ENCODE measurements at regions of chr11 and their contacts with region 1.

Region 1: DNA sequence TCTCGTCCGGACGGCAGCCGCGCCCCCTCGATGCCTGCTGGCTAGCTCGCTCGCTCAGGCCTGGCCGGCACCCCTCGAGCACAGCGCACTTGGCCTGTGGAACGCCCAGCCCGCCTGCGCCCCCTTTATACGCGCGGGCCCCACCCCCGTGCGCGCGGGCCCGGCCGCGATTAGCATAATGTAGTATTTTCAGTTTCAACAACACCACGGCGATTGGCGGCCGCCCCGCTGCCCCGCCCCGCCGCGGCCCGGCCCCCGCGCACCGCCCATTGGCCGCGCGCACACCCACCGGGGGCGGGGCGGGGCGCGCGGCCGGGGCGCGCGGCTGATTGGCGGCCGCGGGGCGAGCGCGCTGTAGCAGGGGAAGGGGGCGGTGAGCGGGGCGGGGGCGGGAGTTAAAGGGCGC is at the start of gene CDKN1C:
- DNase-seq: peak; percentile 53 to 87
- H3K4me3 ChIP-seq: peak within 1 kb of the TSS; percentile 52 to 75 (median 56)
- H3K27ac ChIP-seq: no peak within 1 kb of the TSS
- H3K4me1 ChIP-seq: peaks cover 0 to 29% (median 23%) of the 10 kb centered on the region in 4 experiments; a peak in 6 of 7 replicates
- H3K27me3 ChIP-seq: peaks cover 2 to 79% (median 52%) of the 10 kb centered on the region in 4 experiments
- CTCF ChIP-seq: no peak
- EP300 ChIP-seq: no peak
- POLR2A ChIP-seq: peak in 1 of 2 experiments; percentile 90; a peak in 2 of 3 replicates
- RAD21 ChIP-seq: peak in 1 of 2 experiments; percentile 5; a peak in 1 of 4 replicates
- total RNA-seq, gene CDKN1C: 12.8 and 16.2 TPM in 2 replicates

Region 2: GRCh38 chr11:2555336-2556290 is 330.1 kb before region 1 on chr11:
- CTCF ChIA-PET with region 1: interaction called, 11 read pairs
- POLR2A ChIA-PET with region 1: no interaction called
- DNase-seq: no peak
- H3K4me3 ChIP-seq: no peak overlapping the region
- H3K27ac ChIP-seq: no peak overlapping the region
- H3K4me1 ChIP-seq: no peaks in the 10 kb centered on the region
- H3K27me3 ChIP-seq: peaks cover 13 to 76% (median 44%) of the 10 kb centered on the region in 4 experiments
- CTCF ChIP-seq: no peak
- EP300 ChIP-seq: no peak
- POLR2A ChIP-seq: no peak
- RAD21 ChIP-seq: no peak

Region 3: DNA sequence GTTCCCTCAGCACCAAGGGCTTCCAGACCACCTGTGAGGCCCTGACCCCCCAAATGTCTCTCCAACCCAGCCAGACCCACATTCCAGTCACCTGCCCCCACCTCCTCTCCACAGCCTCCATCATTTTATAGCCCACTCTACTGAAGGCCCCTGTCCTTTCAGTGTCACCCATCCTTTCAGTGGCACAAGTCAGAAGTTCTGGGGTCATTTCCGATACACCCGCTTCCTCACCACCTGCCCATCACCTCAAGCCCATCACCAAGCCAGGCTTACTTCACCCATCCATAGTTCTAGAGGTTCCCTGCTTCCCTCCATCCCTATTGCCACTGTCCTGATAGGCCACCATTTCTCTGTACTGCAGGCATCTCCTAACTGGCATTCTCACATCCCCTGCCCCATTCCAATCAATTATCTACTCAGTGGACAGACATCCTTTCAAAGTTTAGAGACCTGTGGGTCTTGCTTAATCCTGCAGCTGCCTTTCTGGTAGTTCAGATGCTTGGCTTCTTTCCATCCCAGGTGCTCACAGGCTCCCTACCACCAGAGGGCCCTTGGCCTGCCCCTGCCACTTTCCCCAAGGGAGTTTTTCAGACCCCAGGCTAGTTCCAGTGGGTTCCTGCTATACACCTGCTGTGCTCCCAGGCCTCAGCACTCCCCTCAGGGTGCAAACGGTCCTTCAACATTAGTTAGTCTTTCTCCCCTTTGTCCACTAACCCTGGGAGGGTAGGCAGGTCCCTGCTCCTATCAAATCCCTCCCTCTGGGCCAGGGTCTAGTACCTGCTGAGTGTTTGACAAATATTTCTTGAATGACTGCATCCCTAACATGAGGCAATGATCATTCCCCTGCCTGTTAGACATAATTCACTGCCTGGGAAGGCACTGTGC is 193.4 kb before region 1 on chr11:
- CTCF ChIA-PET with region 1: interaction called, 19 read pairs
- POLR2A ChIA-PET with region 1: interaction called, 5 read pairs
- DNase-seq: no peak
- H3K4me3 ChIP-seq: peak overlapping the region in 2 of 4 experiments; percentile 12 to 26; a peak in 1 of 8 replicates
- H3K27ac ChIP-seq: peak overlapping the region; percentile 51; the same call in 1 of the 2 replicates
- H3K4me1 ChIP-seq: peaks cover 47 to 74% (median 68%) of the 10 kb centered on the region in 4 experiments
- H3K27me3 ChIP-seq: no peaks in the 10 kb centered on the region; a peak in 1 of 7 replicates
- CTCF ChIP-seq: peak; percentile 51 to 71 (median 67)
- EP300 ChIP-seq: no peak
- POLR2A ChIP-seq: no peak
- RAD21 ChIP-seq: peak; percentile 45 to 65

Region 4: DNA sequence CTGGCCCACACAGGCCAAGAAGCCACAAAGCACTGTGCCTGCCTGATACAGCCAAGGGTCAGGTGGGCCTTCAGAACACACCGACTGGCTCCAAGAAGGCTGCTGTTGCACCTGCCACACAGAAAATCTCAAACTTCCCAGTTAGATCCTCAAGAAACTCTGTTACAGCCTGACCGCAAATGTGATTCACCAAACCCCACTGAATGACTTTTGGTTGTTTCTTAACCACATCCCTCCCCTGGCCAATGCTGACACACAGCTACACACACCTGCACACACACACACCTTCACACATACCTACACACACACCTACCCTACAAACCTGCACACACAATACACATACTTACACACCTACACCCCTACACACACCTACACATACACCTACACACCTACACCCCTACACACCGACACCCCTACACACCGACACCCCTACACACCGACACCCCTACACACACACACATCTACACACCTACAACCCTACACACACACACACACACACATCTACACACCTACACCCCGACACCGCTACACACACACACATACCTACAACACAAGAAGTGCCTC is 31.6 kb before region 1 on chr11:
- CTCF ChIA-PET with region 1: interaction called, 22 read pairs
- POLR2A ChIA-PET with region 1: no interaction called
- DNase-seq: no peak
- H3K4me3 ChIP-seq: no peak overlapping the region
- H3K27ac ChIP-seq: no peak overlapping the region
- H3K4me1 ChIP-seq: peaks cover 0 to 7% (median 3%) of the 10 kb centered on the region in 4 experiments; a peak in 5 of 7 replicates
- H3K27me3 ChIP-seq: peaks cover 0 to 23% (median 11%) of the 10 kb centered on the region in 4 experiments; a peak in 4 of 7 replicates
- CTCF ChIP-seq: no peak
- EP300 ChIP-seq: no peak
- POLR2A ChIP-seq: no peak
- RAD21 ChIP-seq: no peak

Region 5: DNA sequence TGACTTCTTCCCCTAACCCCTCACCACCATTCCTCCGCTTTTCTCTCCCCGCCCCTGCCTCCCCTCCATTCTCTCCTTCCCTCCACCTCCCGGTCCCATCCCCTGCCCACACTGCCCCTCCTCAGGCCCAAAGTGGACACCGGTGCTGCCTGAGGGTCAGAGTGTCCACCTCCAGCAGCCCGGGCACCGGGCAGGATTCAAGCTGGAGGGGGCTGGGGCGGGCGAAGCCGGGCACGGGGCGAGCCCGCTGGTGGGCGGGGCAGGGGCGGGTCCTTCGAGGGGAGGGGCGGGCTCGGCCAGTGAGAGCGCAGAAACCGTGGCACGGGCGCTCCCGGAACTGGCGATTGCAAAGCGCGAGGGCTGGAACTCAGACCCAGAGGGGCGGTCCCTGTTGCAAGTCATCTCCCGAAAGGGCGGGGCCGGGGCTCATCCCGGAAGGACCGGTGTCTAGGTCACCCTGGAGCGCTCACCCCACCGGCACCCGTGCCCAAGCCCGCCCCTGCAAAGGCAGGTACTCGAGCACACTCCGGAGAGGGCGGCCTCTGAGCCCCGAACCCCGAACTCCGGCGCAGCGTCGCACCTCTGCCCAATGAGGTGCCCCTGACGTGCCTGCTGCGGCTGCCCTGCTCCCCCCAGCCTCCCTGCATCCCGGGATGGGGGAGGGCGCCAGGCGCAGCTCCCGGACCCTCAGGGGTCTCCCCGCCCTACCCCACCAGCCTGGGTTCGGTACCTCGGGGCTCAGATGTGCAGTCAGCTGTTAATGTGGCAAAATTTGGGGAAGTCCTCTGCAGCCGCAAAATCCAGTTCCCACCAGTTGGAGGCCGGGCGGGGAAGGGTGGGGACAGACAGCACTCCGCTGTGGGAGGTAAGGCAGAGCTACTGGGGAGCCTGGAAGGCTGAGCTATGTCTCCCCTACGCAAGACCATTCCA is 16.4 kb after region 1 on chr11:
- CTCF ChIA-PET with region 1: interaction called, 68 read pairs
- POLR2A ChIA-PET with region 1: no interaction called
- DNase-seq: peak; percentile 73 to 92
- H3K4me3 ChIP-seq: peak overlapping the region; percentile 72 to 94 (median 76)
- H3K27ac ChIP-seq: peak overlapping the region; percentile 34; the same call in 1 of the 2 replicates
- H3K4me1 ChIP-seq: peaks cover 0 to 19% (median 14%) of the 10 kb centered on the region in 4 experiments; a peak in 5 of 7 replicates
- H3K27me3 ChIP-seq: peaks cover 0 to 25% (median 5%) of the 10 kb centered on the region in 4 experiments; a peak in 4 of 7 replicates
- CTCF ChIP-seq: no peak
- EP300 ChIP-seq: no peak
- POLR2A ChIP-seq: peak in 1 of 2 experiments; percentile 18; a peak in 1 of 3 replicates
- RAD21 ChIP-seq: no peak

Region 6: DNA sequence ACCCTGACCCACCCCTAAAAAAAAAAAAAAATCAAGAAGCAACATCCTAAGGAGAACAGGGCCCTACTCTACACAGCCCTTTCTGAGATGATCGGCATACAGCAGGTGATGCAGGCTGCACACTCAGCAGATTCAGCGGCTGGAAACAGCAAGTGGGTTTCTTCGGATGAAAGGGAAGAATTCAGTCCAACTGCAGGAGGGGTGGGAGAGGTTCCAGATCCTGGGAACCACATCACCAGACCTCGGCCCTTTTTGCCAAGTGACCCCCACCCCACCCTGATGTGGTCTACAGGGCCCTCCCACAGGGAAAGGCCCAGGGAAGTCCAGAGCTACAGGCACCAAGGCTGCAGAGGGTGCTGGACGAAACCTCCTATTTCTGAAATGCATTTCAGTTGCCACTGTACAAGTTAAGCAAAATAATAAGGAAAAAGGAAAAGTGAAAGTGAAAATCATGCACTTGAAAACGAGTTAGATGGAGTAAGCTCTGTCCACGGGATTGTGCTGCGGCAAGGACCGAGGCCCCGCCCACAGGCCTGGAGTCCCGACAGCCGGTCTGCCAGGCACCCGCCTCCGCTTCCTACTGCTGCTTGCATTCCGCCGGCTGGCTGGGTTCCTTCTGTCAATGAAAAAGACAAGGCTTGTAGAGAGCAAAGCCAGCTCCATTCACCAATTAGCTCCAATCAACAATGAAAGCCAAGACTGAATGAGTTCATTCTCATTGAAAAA is 59.5 kb after region 1 on chr11:
- CTCF ChIA-PET with region 1: no interaction called
- POLR2A ChIA-PET with region 1: no interaction called
- DNase-seq: peak; percentile 39 to 80
- H3K4me3 ChIP-seq: peak overlapping the region in 1 of 4 experiments; percentile 19; a peak in 1 of 8 replicates
- H3K27ac ChIP-seq: no peak overlapping the region
- H3K4me1 ChIP-seq: peaks cover 0 to 30% (median 12%) of the 10 kb centered on the region in 4 experiments; a peak in 6 of 7 replicates
- H3K27me3 ChIP-seq: no peaks in the 10 kb centered on the region
- CTCF ChIP-seq: no peak
- EP300 ChIP-seq: no peak
- POLR2A ChIP-seq: no peak
- RAD21 ChIP-seq: no peak

Measured in H1 (cell line).